ENCODE measurements at regions of chr2 and their contacts with region 1.

Region 1: GRCh38 chr2:109260886-109261700 is 132.1 kb downstream of the SH3RF3 start:
- DNase-seq: peak in 1 of 5 donors; percentile 13
- ATAC-seq: peak in 3 of 4 donors; percentile 15 to 24 (median 23)
- H3K4me3 ChIP-seq: no peak overlapping the region
- H3K27ac ChIP-seq: no peak overlapping the region
- H3K4me1 ChIP-seq: peaks cover 7 to 54% (median 38%) of the 10 kb centered on the region in 12 donors
- H3K27me3 ChIP-seq: no peaks in the 10 kb centered on the region
- CTCF ChIP-seq: peak in 10 of 12 donors; percentile 10 to 36 (median 16)
- POLR2A ChIP-seq: no peak

Region 2: GRCh38 chr2:109209412-109209811 is 51.7 kb before region 1 on chr2:
- intact Hi-C with region 1: loop called in 1 of 10 experiments (anchors 1 kb)
- DNase-seq: no peak
- ATAC-seq: peak in 3 of 4 donors; percentile 62 to 74 (median 74)
- H3K4me3 ChIP-seq: no peak overlapping the region
- H3K27ac ChIP-seq: peak overlapping the region in 2 of 12 donors; percentile 19 to 31
- H3K4me1 ChIP-seq: peaks cover 0 to 60% (median 31%) of the 10 kb centered on the region in 12 donors
- H3K27me3 ChIP-seq: no peaks in the 10 kb centered on the region
- CTCF ChIP-seq: no peak
- POLR2A ChIP-seq: no peak

Region 3: DNA sequence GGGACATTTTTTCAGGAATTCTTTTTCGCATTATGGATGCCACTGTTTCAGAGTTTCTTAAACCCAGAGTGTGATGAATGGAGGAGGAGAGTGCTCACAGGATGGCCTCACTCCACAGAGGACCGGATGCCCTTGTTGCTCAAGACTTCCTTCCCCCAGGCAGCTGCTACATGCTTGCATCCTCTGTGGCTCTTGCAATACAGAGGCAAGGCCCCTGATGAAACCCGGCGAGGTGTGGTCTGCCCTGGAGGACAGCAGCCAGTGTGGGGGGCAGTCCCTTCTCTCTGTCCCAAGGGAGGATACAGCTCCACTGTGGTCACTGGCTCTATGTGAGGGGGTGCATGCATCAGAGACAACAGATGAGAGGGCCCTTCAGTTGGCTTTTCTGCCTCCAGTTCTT is 22.5 kb before region 1 on chr2:
- intact Hi-C with region 1: no loop called
- DNase-seq: peak; percentile 60 to 85 (median 81)
- ATAC-seq: peak; percentile 31 to 81 (median 67)
- H3K4me3 ChIP-seq: no peak overlapping the region
- H3K27ac ChIP-seq: peak overlapping the region in 6 of 12 donors; percentile 1 to 73 (median 18)
- H3K4me1 ChIP-seq: peaks cover 7 to 67% (median 36%) of the 10 kb centered on the region in 12 donors
- H3K27me3 ChIP-seq: no peaks in the 10 kb centered on the region
- CTCF ChIP-seq: no peak
- POLR2A ChIP-seq: no peak